Pancreas (tissue), 10 donors: ENCODE measurements at regions of chr6 and their contacts with region 1.

Region 1: DNA sequence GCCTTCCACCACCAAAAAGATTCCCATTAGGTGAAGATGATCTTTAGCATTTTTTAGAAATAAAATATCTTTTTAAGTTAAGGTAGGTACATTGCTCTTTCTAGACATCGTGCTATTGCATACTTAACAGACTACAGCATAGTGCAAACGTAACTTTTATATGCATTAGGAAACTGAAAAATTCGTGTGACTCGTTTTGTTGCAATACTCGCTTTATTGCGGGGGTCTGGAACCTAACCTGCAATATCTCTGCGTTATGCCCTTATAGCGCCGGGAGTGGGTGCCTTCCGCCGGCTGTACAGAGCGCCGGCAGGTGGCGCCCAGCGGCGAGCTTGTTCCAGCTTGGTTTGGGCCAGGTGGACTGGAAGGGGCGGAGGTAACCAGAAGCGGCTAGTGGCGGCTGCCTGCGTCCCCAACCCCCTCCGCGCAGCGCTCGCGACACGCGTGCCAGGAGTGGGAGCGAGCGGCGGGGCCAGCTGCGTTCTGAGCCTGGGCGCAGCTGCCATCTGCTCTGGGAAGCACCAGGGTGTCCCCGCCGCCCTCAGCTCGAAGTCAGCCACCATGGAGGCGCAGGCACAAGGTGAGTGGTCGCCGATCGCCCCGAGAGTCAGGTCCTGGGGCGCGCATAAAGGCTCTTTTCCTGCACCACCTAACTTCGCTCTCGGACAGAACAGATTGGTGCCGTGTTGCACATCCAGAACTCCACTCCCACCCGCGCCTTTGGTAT is at the start of gene TPD52L1:
- DNase-seq: peak; percentile 89 to 94 (median 90)
- ATAC-seq: peak; percentile 92 to 97 (median 96)
- H3K4me3 ChIP-seq: peak within 1 kb of the TSS; percentile 66 to 84 (median 72)
- H3K27ac ChIP-seq: peak within 1 kb of the TSS; percentile 29 to 78 (median 66)
- H3K4me1 ChIP-seq: peaks cover 0 to 7% (median 5%) of the 10 kb centered on the region in 3 donors
- H3K27me3 ChIP-seq: no peaks in the 10 kb centered on the region
- CTCF ChIP-seq: peak; percentile 73 to 84 (median 77)
- total RNA-seq, gene TPD52L1: 22.5 to 51.6 (median 26.1) TPM

Region 2: GRCh38 chr6:125294925-125295324 is 141.4 kb after region 1 on chr6:
- intact Hi-C with region 1: loop called in 1 of 3 experiments (anchors 10 kb)
- DNase-seq: peak in 2 of 6 donors; percentile 15 to 24
- ATAC-seq: peak; percentile 67 to 86 (median 76)
- H3K4me3 ChIP-seq: no peak overlapping the region
- H3K27ac ChIP-seq: no peak overlapping the region
- H3K4me1 ChIP-seq: peaks cover 0 to 18% (median 3%) of the 10 kb centered on the region in 3 donors
- H3K27me3 ChIP-seq: no peaks in the 10 kb centered on the region
- CTCF ChIP-seq: no peak